ENCODE measurements at regions of chr4 and their contacts with region 1.

Region 1: DNA sequence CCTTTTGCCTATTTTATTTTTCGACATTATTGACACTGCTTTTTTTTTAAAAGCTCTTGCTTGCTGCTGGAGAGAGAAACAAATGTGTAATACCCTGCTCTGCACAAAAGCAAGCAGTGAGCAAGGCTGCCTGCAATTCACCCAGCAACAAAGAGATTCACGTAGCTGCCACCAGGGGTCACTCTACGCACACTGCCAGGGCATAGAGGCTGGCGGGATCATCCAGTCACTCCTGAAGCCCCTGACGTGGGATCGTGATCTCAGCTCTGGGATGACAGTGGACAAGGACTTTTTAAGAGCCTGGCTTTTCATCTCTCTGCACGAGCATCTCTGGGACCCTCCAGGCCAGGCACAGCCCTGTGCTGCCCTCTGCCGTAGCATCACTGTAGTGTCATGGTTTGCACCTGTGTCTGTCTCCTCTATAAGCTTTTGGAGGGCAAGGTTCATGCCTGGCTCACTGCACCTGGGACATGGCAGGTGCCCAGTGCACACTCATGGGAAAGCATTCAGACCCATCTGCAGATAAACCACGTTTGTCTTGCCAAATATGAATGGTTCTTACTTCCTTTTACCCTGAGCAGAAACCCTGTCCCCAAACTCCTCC is 19.8 kb downstream of the C4orf50 start:
- DNase-seq: peak; percentile 88
- H3K4me3 ChIP-seq: peak overlapping the region in 1 of 2 experiments; percentile 57; a peak in 1 of 4 replicates
- H3K27ac ChIP-seq: no peak overlapping the region; a peak in 1 of 4 replicates
- H3K4me1 ChIP-seq: peaks cover 0 to 23% of the 10 kb centered on the region in 2 experiments; a peak in 1 of 4 replicates
- H3K27me3 ChIP-seq: no peaks in the 10 kb centered on the region
- CTCF ChIP-seq: peak; percentile 62
- EP300 ChIP-seq: no peak
- RAD21 ChIP-seq: peak; percentile 96

Region 2: DNA sequence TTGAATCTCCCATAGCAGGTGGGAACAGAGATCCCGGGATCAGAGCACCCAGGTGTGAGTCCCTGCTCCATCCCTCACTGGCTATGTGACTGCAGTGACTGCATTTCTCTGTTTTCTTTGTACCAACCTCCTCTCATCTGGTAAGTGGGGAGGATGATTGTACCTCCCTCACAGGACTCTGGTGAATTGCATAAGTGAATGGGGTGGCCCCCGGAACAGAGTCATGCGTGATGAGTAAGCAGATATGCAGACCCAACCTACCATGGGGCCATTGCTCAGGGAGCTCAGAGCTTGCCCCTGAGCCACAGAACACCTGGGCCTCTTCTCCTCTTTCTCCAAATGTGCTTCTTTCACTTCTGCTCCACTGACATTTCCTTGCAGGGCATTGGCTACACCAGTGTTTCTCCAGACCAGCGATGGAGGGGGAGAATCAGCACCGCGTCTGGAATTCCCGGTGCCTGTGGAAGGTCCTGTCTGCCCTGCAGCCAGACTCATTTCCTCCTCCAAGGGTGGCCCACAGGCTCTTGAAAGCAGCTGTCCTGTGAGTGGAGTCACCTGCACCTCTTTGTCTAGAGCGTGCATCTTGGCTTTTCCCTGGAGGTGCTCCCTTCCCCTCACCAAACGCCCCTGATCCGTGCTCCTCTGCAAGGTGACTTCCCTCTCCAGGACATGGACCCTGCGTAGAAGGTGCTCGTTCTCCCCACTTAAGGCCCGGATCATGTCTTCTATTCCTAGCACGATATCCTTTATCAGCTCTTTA is 10.2 kb before region 1 on chr4:
- CTCF ChIA-PET with region 1: interaction called, 50 read pairs
- POLR2A ChIA-PET with region 1: no interaction called
- DNase-seq: no peak
- H3K4me3 ChIP-seq: no peak overlapping the region
- H3K27ac ChIP-seq: no peak overlapping the region
- H3K4me1 ChIP-seq: no peaks in the 10 kb centered on the region
- H3K27me3 ChIP-seq: no peaks in the 10 kb centered on the region
- CTCF ChIP-seq: no peak
- EP300 ChIP-seq: no peak
- RAD21 ChIP-seq: no peak

Region 3: GRCh38 chr4:6071959-6072720 is 73.7 kb after region 1 on chr4:
- CTCF ChIA-PET with region 1: interaction called, 12 read pairs
- POLR2A ChIA-PET with region 1: no interaction called
- DNase-seq: peak; percentile 46
- H3K4me3 ChIP-seq: no peak overlapping the region
- H3K27ac ChIP-seq: no peak overlapping the region; a peak in 1 of 4 replicates
- H3K4me1 ChIP-seq: peaks cover 0 to 11% of the 10 kb centered on the region in 2 experiments; a peak in 1 of 4 replicates
- H3K27me3 ChIP-seq: no peaks in the 10 kb centered on the region
- CTCF ChIP-seq: no peak
- EP300 ChIP-seq: no peak
- RAD21 ChIP-seq: no peak

Region 4: GRCh38 chr4:6109842-6110719 is 111.6 kb after region 1 on chr4:
- CTCF ChIA-PET with region 1: interaction called, 14 read pairs
- POLR2A ChIA-PET with region 1: no interaction called
- DNase-seq: no peak
- H3K4me3 ChIP-seq: no peak overlapping the region; a peak in 1 of 4 replicates
- H3K27ac ChIP-seq: peak overlapping the region in 1 of 2 experiments; percentile 89; a peak in 2 of 4 replicates
- H3K4me1 ChIP-seq: peaks cover 0 to 72% of the 10 kb centered on the region in 2 experiments; a peak in 2 of 4 replicates
- H3K27me3 ChIP-seq: no peaks in the 10 kb centered on the region
- CTCF ChIP-seq: no peak
- EP300 ChIP-seq: no peak
- RAD21 ChIP-seq: peak; percentile 15; the same call in 1 of the 2 replicates

Region 5: GRCh38 chr4:6229095-6229494 is 230.7 kb after region 1 on chr4:
- CTCF ChIA-PET with region 1: interaction called, 30 read pairs
- POLR2A ChIA-PET with region 1: no interaction called
- DNase-seq: peak; percentile 87
- H3K4me3 ChIP-seq: no peak overlapping the region
- H3K27ac ChIP-seq: peak overlapping the region in 1 of 2 experiments; percentile 48; a peak in 1 of 4 replicates
- H3K4me1 ChIP-seq: peaks cover 0 to 33% of the 10 kb centered on the region in 2 experiments; a peak in 2 of 4 replicates
- H3K27me3 ChIP-seq: no peaks in the 10 kb centered on the region
- CTCF ChIP-seq: no peak
- EP300 ChIP-seq: peak in 1 of 2 experiments; percentile 34; a peak in 1 of 4 replicates
- RAD21 ChIP-seq: peak; percentile 65

Region 6: GRCh38 chr4:6546681-6547447 is 548.4 kb after region 1 on chr4:
- CTCF ChIA-PET with region 1: interaction called, 19 read pairs
- POLR2A ChIA-PET with region 1: no interaction called
- DNase-seq: peak; percentile 85
- H3K4me3 ChIP-seq: peak overlapping the region in 1 of 2 experiments; percentile 26; a peak in 1 of 4 replicates
- H3K27ac ChIP-seq: no peak overlapping the region
- H3K4me1 ChIP-seq: peaks cover 0 to 20% of the 10 kb centered on the region in 2 experiments; a peak in 1 of 4 replicates
- H3K27me3 ChIP-seq: no peaks in the 10 kb centered on the region
- CTCF ChIP-seq: peak; percentile 93
- EP300 ChIP-seq: no peak
- RAD21 ChIP-seq: peak; percentile 84